Posterior vena cava (tissue), 2 donors: ENCODE measurements at regions of chr15 and their contacts with region 1.

Region 1: DNA sequence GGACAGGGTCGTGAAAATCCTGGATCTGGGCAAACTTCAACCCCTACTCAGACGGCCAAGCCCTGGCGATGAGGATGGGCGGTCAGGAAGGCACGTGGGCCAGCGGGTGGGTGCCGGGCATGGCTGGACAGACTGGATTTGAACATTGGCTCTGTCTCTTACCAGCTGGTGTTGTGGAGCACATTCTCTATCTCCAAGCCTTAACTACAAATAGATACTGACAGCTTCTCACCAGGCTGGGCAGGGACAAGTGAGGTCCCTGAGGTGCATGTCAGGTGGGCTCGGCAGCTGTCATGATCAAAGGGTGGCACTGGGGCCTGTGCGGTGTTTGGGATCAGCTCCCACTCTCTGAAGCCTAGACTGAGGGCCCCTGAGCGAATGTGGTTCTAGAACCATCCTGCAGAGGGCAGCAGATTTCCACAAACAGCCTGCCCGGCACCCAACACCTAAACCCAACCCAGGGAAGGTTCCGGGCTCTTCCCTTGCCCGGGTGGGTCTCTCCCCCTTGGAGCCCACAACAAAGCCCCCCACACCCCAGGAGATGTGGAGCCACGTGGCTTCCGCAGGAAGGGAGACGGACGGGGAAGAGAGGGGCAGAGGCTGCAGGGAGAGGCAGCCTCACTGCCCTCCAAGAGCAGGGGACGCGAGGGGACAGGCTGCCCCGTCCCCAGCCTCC is 58.4 kb downstream of the RGMA start:
- DNase-seq: peak; percentile 89

Region 2: DNA sequence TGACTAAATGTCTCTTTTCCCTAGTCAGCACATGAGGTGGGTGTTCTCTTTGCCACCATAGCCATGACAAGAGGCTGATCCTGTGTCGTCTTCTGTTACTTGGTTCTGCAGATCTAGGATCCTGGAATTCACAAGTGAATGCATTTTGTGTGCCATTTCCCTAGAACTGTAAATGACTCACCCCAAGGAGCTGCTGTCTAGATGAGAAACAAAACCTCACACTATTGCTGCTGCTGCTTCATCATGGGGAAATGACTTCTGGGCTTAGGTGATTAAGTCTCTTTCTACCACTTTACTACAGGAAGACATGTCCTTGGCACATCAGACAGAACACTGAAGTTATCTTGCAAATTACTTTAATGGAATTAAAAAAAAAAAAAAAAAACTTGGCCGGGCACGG is 1122.2 kb before region 1 on chr15:
- intact Hi-C with region 1: no loop called
- DNase-seq: no peak

Region 3: DNA sequence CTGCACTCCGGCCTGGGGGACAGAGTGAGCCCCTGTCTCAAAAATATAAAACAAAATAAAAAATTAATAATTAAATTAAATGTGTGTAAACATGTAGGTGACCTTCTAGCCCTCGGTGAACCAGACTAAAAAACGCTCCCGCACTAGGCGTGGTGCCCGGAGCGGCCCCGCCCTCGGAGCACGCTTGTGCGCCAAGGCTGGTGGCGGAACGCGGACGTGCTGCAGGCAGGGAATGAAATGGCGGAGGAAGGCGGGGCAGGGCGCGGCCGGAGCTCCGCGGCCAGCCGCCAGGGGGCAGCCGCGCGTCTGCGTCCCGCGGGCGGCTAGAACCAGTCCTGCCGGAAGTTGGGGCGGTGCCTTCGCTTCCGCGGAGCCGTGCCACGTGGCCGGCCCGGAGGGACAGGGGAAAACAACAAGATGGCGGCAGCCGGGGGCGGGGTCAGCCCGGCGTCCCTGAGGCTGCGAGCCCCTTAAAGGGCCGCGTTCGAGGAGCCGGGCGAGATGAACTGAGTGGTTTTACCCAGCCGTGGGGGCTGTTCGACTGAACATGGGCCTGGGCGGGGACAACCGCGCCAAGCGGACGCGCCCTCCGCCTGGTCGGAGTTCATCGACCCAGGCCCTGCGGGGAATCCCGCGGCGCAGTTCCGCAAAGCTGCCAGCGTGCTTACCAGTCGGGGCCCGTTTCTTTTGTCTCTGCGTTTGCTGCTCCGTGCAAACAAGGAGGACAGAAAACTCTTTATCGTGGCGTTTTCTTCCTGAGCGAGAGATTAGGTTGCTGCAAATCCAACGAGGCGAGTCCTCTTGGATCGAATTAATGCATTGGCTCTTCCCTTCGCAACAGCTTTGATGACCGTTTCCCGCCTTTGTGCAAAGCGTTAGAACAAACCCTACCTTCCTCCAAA is 221.3 kb before region 1 on chr15:
- intact Hi-C with region 1: loop called in 1 of 2 experiments (anchors 10 kb)
- DNase-seq: peak; percentile 100

Region 4: DNA sequence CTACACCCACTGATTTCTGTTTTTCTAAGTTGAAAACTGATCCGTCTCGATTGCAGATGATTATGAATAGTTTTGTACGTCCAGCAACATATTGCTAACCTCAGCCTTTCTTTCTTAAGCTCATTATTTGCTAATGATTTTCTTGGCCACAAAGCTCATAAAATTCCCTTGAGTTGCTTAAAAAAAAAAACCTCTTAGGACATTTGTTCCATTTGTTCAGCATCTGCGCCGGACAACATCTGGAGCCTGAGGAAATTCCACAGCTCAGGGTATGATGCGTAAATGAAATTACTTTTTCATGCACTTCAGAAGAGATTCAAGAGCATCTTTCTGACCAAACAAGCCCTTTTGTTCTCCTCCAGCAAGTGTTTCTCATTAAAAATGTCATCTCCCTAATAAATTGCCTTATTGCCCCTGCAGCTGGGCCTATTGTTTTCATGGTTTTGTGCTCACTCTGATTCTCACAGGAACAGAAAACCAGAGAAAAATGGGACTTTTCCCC is 951.7 kb after region 1 on chr15:
- intact Hi-C with region 1: loop called in 1 of 2 experiments (anchors 10 kb)
- DNase-seq: no peak

Region 5: GRCh38 chr15:94119923-94120775 is 1089.6 kb after region 1 on chr15:
- intact Hi-C with region 1: loop called (anchors 10 kb)
- DNase-seq: no peak

Region 6: GRCh38 chr15:94317201-94317600 is 1286.6 kb after region 1 on chr15:
- intact Hi-C with region 1: loop called in 1 of 2 experiments (anchors 10 kb)
- DNase-seq: no peak